Activated naive CD8-positive, alpha-beta T cell treated with anti-CD3 and anti-CD28 coated beads, Interleukin-2, amount 10 ng/mL, durations not matched to agents 7 days and 5 days (primary cell): ENCODE measurements at regions of chr2 and their contacts with region 1.

Region 1: DNA sequence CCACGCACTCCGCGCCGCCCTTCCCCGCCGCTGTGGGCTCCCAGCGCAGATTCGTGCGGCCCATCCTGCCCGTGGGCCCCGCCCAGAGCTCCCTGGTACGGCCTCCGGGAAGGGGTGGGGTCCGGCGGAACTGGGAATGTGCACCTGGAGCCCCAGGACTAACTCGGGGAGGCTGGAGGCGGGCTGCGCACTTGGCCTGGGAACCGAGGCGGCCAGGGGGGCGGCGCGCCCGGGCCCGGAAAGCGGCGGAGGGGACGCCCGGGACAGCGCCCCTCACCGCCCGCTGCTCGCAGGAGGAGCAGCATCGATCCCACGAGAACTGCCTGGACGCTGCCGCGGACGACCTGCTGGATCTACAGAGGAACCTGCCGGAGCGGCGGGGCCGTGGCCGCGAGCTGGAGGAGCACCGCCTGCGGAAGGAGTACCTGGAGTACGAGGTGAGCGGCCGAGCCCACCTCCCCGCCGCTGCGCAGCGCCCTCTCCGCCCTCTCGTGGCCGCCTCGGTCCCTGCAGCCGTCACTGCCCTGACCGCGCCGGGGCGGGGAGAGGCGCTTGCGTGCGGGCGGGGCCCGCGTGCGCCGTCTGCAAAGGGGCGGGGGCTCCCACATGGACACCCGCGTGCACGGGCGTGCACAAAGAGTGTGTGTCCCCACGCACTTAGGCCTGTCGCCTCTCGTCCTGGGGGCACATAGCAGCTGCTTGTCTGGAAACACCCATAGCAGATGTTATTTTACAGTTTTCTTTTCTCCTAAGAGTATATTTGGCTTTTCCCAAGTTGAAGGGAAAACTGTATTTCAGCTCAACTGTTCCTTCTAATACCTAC is 25.2 kb downstream of the PSD4 start:
- DNase-seq: peak; percentile 93
- ATAC-seq: peak; percentile 71
- H3K4me3 Mint-ChIP-seq: no peak overlapping the region
- H3K27ac Mint-ChIP-seq: no peak overlapping the region
- H3K4me1 Mint-ChIP-seq: peaks cover 53% of the 10 kb centered on the region
- H3K27me3 Mint-ChIP-seq: no peaks in the 10 kb centered on the region

Region 2: DNA sequence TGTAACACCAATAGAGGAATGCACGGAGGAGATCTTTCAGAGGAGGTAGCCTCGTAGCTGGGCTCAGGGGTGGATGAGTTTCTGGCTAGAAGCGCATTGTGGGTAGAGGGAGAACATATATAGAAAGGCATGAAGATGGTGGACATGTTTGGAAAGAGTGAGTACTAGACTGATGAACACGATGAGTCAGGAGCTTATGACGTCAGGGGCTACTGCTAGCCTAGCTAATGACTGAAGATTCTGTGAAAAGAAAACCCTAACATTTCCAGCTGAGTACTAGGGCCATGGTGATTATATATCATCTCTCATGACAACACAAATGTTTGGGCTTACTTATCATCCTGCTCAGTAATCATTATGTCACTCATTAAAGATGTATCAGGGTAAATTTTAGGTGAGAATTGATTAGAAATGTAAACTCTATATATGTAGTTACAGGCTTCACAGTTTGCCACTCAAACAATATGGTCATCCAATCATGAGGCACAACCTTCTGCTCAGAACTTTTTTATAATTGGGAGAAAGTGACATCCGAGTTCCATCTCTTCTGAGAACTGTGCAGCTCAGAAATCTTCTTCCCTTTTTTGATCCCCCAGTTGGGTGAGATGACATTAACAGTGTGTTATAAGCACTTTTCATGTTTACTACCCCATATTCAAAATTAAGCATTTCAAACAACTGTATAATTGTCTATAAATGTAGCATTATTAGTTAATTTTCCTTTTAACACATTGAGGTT is 93.8 kb before region 1 on chr2:
- POLR2A ChIA-PET with region 1: no interaction called
- DNase-seq: no peak
- ATAC-seq: no peak
- H3K4me3 Mint-ChIP-seq: no peak overlapping the region
- H3K27ac Mint-ChIP-seq: no peak overlapping the region
- H3K4me1 Mint-ChIP-seq: peaks cover 7% of the 10 kb centered on the region
- H3K27me3 Mint-ChIP-seq: no peaks in the 10 kb centered on the region

Region 3: DNA sequence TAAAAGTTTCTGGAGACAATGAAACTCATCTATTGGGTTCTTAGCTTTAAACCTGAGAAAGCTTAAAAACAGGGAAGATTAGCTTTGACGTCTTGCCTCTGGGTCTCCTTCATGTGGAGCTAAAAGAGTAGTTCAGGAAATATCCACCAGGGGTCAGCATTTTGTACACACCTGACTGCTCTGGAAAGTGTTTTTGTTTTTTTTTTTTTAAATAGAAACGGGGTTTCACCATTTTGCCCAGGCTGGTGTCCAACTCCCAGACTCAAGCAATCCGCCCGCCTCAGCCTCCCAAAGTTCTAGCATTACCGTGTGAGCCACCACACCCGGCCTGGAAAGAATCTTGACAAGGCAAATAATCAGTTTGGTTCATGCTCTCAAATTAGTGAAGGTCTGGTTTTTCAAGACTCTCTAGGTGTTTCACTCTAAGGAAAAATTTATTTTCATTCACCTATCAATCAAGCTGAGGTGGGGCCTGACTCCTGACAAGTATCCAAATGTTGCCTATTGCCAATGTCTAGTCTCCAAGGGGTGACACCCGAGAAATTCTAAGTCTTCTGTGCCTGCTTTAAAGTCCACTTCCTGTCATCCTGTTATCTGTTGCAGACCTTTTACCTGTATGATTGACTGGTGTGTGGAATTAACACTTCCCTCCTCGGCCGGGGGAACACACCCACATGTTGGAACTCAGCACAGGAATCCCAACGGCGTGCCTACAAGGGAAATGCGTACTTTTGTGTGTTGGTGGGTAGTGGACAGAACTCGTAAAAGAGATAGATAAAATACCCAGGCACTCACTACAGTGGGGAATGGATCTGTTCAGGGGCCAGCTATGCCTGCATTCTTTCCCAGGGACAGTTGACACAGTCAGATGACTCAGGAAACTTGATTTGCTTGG is 60.3 kb before region 1 on chr2:
- POLR2A ChIA-PET with region 1: interaction called, 40 read pairs
- DNase-seq: no peak
- ATAC-seq: peak; percentile 74
- H3K4me3 Mint-ChIP-seq: peak overlapping the region; percentile 73
- H3K27ac Mint-ChIP-seq: peak overlapping the region; percentile 84
- H3K4me1 Mint-ChIP-seq: peaks cover 28% of the 10 kb centered on the region
- H3K27me3 Mint-ChIP-seq: peaks cover 4% of the 10 kb centered on the region